ENCODE measurements at regions of chr1 and their contacts with region 1.

Region 1: GRCh38 chr1:9455487-9456234 is 83.6 kb upstream of the SLC25A33 start:
- DNase-seq: peak; percentile 80
- ATAC-seq: peak; percentile 77
- H3K4me3 ChIP-seq: no peak overlapping the region
- H3K4me3 Mint-ChIP-seq: no peak overlapping the region
- H3K27ac ChIP-seq: no peak overlapping the region
- H3K27ac Mint-ChIP-seq: no peak overlapping the region
- H3K4me1 ChIP-seq: peaks cover 0 to 3% of the 10 kb centered on the region in 2 donors
- H3K4me1 Mint-ChIP-seq: peaks cover 3% of the 10 kb centered on the region
- H3K27me3 ChIP-seq: no peaks in the 10 kb centered on the region
- H3K27me3 Mint-ChIP-seq: no peaks in the 10 kb centered on the region
- CTCF ChIP-seq: peak; percentile 92

Region 2: DNA sequence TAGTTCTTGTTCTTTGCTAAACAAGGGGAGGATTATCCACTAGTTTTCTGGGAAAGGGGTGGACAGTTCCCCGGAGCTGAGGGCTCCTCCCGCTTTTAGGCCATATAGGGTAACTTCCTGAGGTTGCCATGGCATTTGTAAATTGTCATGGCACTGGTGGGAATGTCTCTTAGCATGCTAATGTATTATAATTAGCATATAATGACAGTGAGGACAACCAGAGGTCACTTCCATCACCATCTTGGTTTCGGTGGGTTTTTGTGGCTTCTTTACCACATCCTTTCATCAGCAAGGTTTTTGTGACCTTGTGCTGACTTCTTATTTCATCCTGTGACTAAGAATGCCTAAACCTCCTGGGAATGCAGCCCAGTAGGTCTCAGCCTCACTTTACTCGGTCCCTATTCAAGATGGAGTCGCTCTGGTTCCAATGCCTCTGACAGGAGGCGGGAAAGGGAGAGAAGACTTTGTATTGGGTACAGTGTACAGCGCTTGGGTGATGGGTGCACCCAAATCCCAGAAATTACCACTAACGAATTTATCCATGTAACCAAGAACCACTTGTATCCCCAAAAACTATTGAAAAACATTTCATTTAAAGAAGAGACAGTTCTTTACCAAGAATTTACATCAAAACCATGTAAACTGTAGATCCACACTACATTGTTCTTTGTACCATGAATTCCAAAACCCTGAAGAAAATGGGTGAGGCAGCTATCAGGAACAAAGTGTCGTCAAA is 377.5 kb before region 1 on chr1:
- CTCF ChIA-PET with region 1: no interaction called
- POLR2A ChIA-PET with region 1: interaction called, 11 read pairs
- intact Hi-C with region 1: no loop called
- DNase-seq: no peak
- ATAC-seq: peak; percentile 4
- H3K4me3 ChIP-seq: peak overlapping the region in 1 of 5 experiments; percentile 8
- H3K4me3 Mint-ChIP-seq: peak overlapping the region; percentile 70
- H3K27ac ChIP-seq: no peak overlapping the region
- H3K27ac Mint-ChIP-seq: peak overlapping the region; percentile 26
- H3K4me1 ChIP-seq: peaks cover 85 to 94% of the 10 kb centered on the region in 2 donors
- H3K4me1 Mint-ChIP-seq: peaks cover 80% of the 10 kb centered on the region
- H3K27me3 ChIP-seq: peaks cover 0 to 6% (median 3%) of the 10 kb centered on the region in 4 experiments
- H3K27me3 Mint-ChIP-seq: peaks cover 14% of the 10 kb centered on the region
- CTCF ChIP-seq: no peak

Region 3: DNA sequence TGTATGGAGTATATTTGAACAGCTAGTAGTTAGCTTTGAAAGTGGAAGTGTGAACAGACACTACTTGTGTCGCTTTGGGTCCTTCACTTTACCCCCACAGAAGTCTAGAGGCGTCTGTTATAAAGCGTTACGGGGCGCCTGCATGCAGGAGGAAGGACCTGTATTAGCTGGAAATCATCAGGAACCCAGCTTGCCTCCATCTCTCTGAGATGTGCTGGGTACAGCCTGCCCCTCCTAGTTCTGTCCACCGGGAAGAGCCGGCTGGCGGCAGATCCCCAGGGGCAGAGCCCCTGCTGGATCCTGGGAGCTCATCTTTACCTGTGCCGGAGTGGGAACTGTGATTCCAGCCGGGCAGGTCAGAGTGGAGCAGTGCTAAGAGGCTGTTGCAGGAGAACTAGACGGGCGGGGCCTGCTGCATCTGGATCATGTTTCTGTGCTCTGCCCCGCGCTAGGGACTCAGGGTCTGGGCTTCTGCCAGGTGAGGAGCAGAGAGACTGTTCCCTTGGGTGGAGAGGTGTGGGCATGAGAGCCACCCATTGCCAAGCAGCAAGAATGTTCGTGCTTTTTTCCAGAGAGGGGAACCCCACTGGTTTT is 185.3 kb before region 1 on chr1:
- CTCF ChIA-PET with region 1: interaction called, 20 read pairs
- POLR2A ChIA-PET with region 1: no interaction called
- intact Hi-C with region 1: no loop called
- DNase-seq: no peak
- ATAC-seq: no peak
- H3K4me3 ChIP-seq: no peak overlapping the region
- H3K4me3 Mint-ChIP-seq: no peak overlapping the region
- H3K27ac ChIP-seq: no peak overlapping the region
- H3K27ac Mint-ChIP-seq: no peak overlapping the region
- H3K4me1 ChIP-seq: no peaks in the 10 kb centered on the region
- H3K4me1 Mint-ChIP-seq: peaks cover 3% of the 10 kb centered on the region
- H3K27me3 ChIP-seq: no peaks in the 10 kb centered on the region
- H3K27me3 Mint-ChIP-seq: no peaks in the 10 kb centered on the region
- CTCF ChIP-seq: no peak

Region 4: GRCh38 chr1:9280015-9280860 is 175.4 kb before region 1 on chr1:
- CTCF ChIA-PET with region 1: interaction called, 38 read pairs
- POLR2A ChIA-PET with region 1: no interaction called
- intact Hi-C with region 1: no loop called
- DNase-seq: no peak
- ATAC-seq: no peak
- H3K4me3 ChIP-seq: no peak overlapping the region
- H3K4me3 Mint-ChIP-seq: no peak overlapping the region
- H3K27ac ChIP-seq: no peak overlapping the region
- H3K27ac Mint-ChIP-seq: no peak overlapping the region
- H3K4me1 ChIP-seq: peaks cover 0 to 20% of the 10 kb centered on the region in 2 donors
- H3K4me1 Mint-ChIP-seq: peaks cover 23% of the 10 kb centered on the region
- H3K27me3 ChIP-seq: peaks cover 0 to 14% (median 4%) of the 10 kb centered on the region in 4 experiments
- H3K27me3 Mint-ChIP-seq: peaks cover 14% of the 10 kb centered on the region
- CTCF ChIP-seq: no peak

Region 5: DNA sequence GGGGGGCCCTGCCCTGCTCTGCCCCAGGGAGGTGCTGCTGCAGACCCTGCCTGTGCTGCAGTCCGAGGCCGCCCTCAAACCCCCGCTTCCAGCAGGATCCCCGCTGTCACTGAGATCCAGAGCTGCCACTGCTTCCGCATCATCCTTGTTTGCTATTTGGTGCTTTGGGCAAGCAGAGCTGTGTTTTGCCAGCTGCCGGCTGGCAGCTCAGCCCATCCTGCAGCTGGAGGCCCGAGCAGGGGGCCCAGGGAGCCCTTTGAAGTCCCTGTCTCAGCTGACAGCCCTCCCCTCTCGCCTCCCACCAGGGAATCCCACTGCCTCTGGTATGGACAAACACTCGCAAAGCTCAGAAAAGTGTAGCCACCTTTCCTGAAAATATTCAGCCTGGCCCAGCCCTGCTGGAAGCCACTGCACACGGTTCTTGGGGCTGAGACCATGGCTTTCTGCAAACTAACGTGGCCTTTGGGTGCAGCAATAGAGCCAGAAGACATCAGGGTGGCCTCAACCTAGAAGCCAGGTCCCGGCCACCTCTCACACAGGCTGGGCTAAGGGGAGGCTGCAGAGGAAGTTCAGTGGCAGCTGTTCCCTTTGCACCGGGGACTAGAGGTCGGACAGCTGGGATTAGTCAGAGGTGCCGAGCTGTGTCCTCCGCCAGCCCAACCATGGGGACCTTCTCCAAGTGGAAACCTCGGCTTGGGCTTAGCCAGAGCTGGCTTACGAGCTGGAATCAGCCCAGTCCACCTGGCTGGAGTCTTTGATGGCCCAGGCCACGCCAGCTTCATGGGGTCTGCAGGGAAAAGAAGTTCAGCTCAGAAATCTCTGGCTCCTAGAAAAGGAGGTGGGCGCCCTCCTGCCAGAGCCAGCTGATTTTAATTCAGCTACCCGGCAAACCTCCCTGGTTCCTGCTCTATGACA is 55.9 kb before region 1 on chr1:
- CTCF ChIA-PET with region 1: interaction called, 10 read pairs
- POLR2A ChIA-PET with region 1: no interaction called
- intact Hi-C with region 1: no loop called
- DNase-seq: no peak
- ATAC-seq: peak; percentile 39
- H3K4me3 ChIP-seq: no peak overlapping the region
- H3K4me3 Mint-ChIP-seq: no peak overlapping the region
- H3K27ac ChIP-seq: no peak overlapping the region
- H3K27ac Mint-ChIP-seq: peak overlapping the region; percentile 10
- H3K4me1 ChIP-seq: peaks cover 10 to 28% of the 10 kb centered on the region in 2 donors
- H3K4me1 Mint-ChIP-seq: peaks cover 16% of the 10 kb centered on the region
- H3K27me3 ChIP-seq: no peaks in the 10 kb centered on the region
- H3K27me3 Mint-ChIP-seq: no peaks in the 10 kb centered on the region
- CTCF ChIP-seq: no peak